Caco-2 (cell line): ENCODE measurements at regions of chr2 and their contacts with region 1.

Region 1: GRCh38 chr2:38421274-38422056 is 44.4 kb upstream of the ATL2 start:
- DNase-seq: no peak
- H3K4me3 ChIP-seq: no peak overlapping the region
- H3K4me3 Mint-ChIP-seq: no peak overlapping the region
- H3K27ac Mint-ChIP-seq: no peak overlapping the region
- H3K4me1 ChIP-seq: 0 out of 2 replicates have a peak, but pooled peaks cover 4% of the 10 kb centered on the region
- H3K4me1 Mint-ChIP-seq: no peaks in the 10 kb centered on the region
- H3K27me3 ChIP-seq: no peaks in the 10 kb centered on the region
- H3K27me3 Mint-ChIP-seq: no peaks in the 10 kb centered on the region
- CTCF ChIP-seq: no peak

Region 2: DNA sequence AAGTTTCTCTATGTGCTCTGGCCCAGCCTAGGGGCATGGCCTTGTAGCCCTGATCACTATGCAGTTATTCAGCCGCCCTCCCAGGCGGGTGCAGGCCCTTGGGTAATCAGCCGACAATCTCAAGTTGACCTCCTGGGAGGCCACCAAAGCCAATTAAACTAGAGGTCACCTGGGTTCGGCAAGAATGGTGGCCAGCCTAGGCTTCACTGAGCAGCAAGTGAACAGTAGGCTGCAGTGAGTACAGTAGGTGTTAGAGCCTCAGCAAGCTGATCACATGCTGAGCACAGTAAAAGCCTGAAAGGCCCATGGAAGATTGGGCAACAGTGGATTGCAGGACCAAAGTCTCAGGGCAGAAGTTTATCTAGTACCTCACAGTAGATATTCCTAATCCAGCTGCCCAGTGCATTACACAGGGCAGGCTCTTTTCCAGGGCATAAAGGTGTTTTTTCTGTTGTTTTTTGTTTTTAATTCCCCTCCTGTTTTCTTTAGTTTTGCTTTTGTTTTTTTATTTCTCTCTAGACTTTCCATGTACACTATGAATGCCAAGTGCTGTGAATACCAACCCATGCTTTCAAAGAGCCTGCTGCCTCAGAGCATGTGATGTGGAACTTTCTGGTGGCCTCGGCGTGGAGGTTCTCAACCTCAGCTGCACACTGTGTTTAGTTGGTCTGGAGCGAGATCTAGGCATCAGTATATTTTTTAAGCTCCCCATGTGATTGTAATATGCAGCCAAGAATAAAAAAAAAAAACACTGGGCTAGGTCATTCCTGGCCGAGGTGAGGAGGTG is 11.5 kb after region 1 on chr2:
- CTCF ChIA-PET with region 1: no interaction called
- POLR2A ChIA-PET with region 1: interaction called, 14 read pairs
- intact Hi-C with region 1: no loop called
- DNase-seq: peak; percentile 44 to 59
- H3K4me3 ChIP-seq: no peak overlapping the region
- H3K4me3 Mint-ChIP-seq: no peak overlapping the region
- H3K27ac Mint-ChIP-seq: no peak overlapping the region
- H3K4me1 ChIP-seq: peaks cover 12% of the 10 kb centered on the region
- H3K4me1 Mint-ChIP-seq: no peaks in the 10 kb centered on the region
- H3K27me3 ChIP-seq: no peaks in the 10 kb centered on the region
- H3K27me3 Mint-ChIP-seq: no peaks in the 10 kb centered on the region
- CTCF ChIP-seq: no peak